Tibial artery (tissue), 4 donors: ENCODE measurements at regions of chr1 and their contacts with region 1.

Region 1: GRCh38 chr1:99106274-99106673 is 101.6 kb upstream of the PLPPR5 start:
- DNase-seq: no peak
- H3K4me3 ChIP-seq: no peak overlapping the region
- H3K27ac ChIP-seq: no peak overlapping the region
- H3K4me1 ChIP-seq: no peaks in the 10 kb centered on the region
- H3K27me3 ChIP-seq: no peaks in the 10 kb centered on the region
- CTCF ChIP-seq: no peak

Region 2: DNA sequence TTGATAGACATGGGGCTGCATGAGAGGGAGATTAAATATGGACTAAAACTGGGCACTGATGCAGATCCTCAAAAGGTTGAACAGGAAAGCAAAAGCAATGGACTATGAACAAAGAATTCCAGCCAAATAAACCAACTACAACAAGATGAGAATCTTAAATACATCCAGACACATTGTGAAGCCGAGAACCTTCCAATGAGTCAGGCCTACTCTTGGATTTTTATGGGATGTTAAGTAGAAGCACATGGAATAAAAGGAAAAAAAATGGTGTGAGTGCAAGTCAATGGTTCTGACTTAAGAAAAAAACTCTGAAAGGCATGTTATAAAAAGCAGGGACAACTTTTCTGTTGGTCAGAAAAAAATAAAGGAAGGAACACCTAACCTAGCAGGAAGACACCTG is 1412.7 kb before region 1 on chr1:
- intact Hi-C with region 1: no loop called
- DNase-seq: no peak
- H3K4me3 ChIP-seq: no peak overlapping the region
- H3K27ac ChIP-seq: no peak overlapping the region
- H3K4me1 ChIP-seq: no peaks in the 10 kb centered on the region
- H3K27me3 ChIP-seq: no peaks in the 10 kb centered on the region
- CTCF ChIP-seq: no peak

Region 3: GRCh38 chr1:99645699-99646531 is 539.6 kb after region 1 on chr1 and contains the start of gene PALMD:
- intact Hi-C with region 1: no loop called
- DNase-seq: peak in 1 of 2 donors; percentile 30
- H3K4me3 ChIP-seq: peak within 1 kb of the TSS; percentile 24 to 29
- H3K27ac ChIP-seq: peak within 1 kb of the TSS in 1 of 2 donors; percentile 25
- H3K4me1 ChIP-seq: peaks cover 0 to 13% (median 0%) of the 10 kb centered on the region in 4 donors
- H3K27me3 ChIP-seq: no peaks in the 10 kb centered on the region
- CTCF ChIP-seq: no peak

Region 4: DNA sequence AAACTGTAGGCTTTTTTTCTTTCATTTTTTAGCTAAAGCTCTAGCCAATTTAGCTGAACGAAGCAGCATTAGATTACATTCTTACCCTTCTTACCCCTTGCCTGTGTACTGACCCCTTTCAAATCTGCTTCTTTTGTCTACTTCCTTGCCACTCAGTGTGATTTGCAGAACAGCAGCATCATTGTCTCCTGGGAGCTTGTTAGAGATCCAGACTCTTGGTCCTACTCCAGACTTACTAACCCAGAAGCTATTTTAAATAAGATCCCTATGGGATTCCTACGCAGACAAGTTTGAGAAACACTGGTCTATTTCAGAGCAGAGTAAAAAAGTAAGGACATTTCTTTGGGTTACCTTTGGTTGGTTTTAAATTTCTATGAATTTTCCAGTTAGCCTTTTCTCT is 1057.9 kb after region 1 on chr1:
- intact Hi-C with region 1: loop called (anchors 5 kb)
- DNase-seq: no peak
- H3K4me3 ChIP-seq: no peak overlapping the region
- H3K27ac ChIP-seq: no peak overlapping the region
- H3K4me1 ChIP-seq: peaks cover 0 to 9% (median 4%) of the 10 kb centered on the region in 4 donors
- H3K27me3 ChIP-seq: no peaks in the 10 kb centered on the region
- CTCF ChIP-seq: no peak